Right ventricle myocardium superior (tissue), 1 donor: ENCODE measurements at regions of chr2 and their contacts with region 1.

Region 1: DNA sequence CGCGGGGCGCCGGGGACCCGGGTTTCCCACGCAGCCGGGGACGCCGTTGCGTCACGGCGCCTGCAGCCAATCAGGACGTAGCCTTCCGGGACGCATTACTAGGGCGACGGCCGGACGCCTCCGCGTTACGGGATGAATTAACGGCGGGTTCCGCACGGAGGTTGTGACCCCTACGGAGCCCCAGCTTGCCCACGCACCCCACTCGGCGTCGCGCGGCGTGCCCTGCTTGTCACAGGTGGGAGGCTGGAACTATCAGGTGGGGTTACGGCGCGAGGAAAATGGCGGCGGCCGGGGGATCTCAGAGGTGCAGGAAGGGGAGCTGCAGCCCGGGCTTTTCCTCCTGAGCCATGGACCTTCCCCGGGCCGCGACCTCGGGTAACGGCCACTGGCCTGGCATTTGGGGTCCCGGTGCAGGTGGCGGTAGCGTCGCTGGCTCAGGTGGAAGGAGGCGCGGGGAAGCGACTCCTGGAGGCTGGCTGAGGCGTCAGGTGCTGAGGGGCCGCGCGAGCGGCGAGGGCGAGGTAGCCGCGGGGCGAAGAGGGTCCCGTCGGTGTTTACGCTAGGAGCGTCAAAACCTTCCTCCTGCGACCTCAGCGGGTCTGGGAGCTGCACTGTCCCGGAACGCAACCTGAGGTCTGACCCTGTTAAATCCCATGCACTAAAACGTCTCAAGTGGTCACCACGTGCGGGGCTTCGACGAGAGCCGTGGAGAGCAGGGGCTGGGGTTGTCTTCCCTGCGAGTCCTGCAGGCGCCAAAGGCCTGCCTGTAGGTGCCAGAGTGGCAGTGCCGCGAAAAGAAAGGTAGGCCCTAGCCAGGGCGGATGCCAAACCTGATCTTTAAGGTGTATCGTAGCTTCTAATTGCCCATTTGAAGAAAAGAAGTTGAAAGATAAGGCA is at the start of gene LCLAT1:
- DNase-seq: peak; percentile 94
- ATAC-seq: peak; percentile 98
- total RNA-seq, gene LCLAT1: 26.3 TPM

Region 2: GRCh38 chr2:30336978-30337841 is 110.2 kb before region 1 on chr2:
- intact Hi-C with region 1: loop called (anchors 10 kb)
- DNase-seq: no peak
- ATAC-seq: no peak

Region 3: DNA sequence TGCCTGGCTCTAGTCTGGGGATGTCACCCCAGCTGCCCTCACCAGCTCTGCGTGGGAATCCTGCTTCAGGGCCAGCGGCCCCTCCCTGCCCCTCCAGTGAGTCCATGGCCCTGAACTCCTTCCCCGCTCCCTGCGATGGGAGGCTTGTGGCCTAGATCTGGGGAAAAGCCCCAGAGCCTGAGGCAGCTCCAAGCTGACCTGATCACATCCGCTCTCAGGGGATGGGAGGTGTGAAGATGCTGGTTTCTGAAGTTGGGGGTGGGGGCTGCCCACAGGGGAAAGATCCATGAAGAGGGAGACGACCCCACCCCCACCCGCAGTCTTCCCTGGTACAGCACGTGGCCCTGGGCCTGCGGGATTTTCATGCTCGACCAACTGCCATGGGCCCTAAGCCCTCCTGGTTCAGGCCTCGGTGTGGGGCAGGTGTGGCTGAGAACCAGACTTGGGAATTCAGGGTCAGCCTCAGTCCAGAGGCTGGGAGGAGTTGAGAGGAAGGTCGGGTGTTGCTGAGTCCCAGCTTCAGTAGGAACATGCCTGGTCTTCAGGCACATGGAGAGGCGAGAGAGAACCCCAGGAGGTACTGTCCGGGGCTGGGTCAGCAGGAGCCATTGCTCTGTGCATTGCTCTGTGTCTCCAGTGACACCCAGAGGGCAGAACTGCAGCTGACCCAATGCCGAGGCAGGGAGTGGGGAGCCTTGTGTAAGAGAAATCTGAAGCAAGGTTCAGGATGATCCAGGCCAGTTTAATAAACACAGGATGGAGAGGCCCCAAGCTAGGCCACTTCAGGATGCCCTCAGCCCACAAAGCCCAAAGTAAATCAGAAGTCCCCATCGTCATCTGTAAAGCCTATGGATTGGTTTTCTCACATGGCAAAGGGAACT is 244.8 kb after region 1 on chr2:
- intact Hi-C with region 1: loop called (anchors 10 kb)
- DNase-seq: no peak
- ATAC-seq: peak; percentile 51

Region 4: GRCh38 chr2:30747211-30747610 is 299.8 kb after region 1 on chr2:
- intact Hi-C with region 1: no loop called
- DNase-seq: no peak
- ATAC-seq: no peak